ENCODE measurements at regions of chr5 and their contacts with region 1.

Region 1: DNA sequence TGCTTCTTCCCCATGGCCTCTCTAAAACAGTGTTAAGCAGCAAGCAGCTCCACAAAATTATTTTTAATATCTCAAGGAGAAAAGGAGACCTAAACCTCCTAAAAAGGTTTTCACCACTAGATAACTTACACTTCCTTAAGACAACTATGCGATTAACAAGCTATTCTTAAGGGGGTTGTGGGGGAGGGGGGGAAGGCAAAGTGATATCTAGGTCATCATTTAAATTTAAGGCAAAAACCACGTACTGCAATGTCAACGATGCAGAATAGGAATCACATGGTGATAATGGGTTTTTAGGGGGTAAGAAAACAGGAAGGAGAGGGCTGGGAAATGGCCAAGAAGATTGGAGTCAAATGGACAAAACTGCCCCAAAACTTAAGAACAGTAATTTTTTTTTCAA is 32.6 kb downstream of the CSNK1A1 start:
- DNase-seq: no peak
- ATAC-seq: no peak
- H3K4me3 Mint-ChIP-seq: no peak overlapping the region
- H3K27ac Mint-ChIP-seq: peak overlapping the region; percentile 57
- H3K4me1 Mint-ChIP-seq: peaks cover 75% of the 10 kb centered on the region
- H3K27me3 Mint-ChIP-seq: no peaks in the 10 kb centered on the region
- CTCF ChIP-seq: no peak

Region 2: GRCh38 chr5:149551200-149552037 is 32.8 kb after region 1 on chr5 and contains the start of gene CSNK1A1:
- CTCF ChIA-PET with region 1: interaction called, 8 read pairs
- POLR2A ChIA-PET with region 1: interaction called, 11 read pairs
- intact Hi-C with region 1: no loop called
- DNase-seq: peak; percentile 99
- ATAC-seq: peak; percentile 90
- H3K4me3 Mint-ChIP-seq: peak within 1 kb of the TSS; percentile 96
- H3K27ac Mint-ChIP-seq: peak within 1 kb of the TSS; percentile 99
- H3K4me1 Mint-ChIP-seq: peaks cover 23% of the 10 kb centered on the region
- H3K27me3 Mint-ChIP-seq: no peaks in the 10 kb centered on the region
- CTCF ChIP-seq: peak; percentile 70
- total RNA-seq, gene CSNK1A1: 154 to 168 TPM

Region 3: GRCh38 chr5:149605998-149606724 is 87.5 kb after region 1 on chr5:
- CTCF ChIA-PET with region 1: no interaction called
- POLR2A ChIA-PET with region 1: no interaction called
- intact Hi-C with region 1: no loop called
- DNase-seq: no peak
- ATAC-seq: no peak
- H3K4me3 Mint-ChIP-seq: no peak overlapping the region
- H3K27ac Mint-ChIP-seq: no peak overlapping the region
- H3K4me1 Mint-ChIP-seq: peaks cover 3% of the 10 kb centered on the region
- H3K27me3 Mint-ChIP-seq: no peaks in the 10 kb centered on the region
- CTCF ChIP-seq: no peak

Measured in activated CD8-positive, alpha-beta T cell treated with anti-CD3 and anti-CD28 coated beads for 36 hours (primary cell).